ENCODE measurements at regions of chr1 and their contacts with region 1.

Region 1: DNA sequence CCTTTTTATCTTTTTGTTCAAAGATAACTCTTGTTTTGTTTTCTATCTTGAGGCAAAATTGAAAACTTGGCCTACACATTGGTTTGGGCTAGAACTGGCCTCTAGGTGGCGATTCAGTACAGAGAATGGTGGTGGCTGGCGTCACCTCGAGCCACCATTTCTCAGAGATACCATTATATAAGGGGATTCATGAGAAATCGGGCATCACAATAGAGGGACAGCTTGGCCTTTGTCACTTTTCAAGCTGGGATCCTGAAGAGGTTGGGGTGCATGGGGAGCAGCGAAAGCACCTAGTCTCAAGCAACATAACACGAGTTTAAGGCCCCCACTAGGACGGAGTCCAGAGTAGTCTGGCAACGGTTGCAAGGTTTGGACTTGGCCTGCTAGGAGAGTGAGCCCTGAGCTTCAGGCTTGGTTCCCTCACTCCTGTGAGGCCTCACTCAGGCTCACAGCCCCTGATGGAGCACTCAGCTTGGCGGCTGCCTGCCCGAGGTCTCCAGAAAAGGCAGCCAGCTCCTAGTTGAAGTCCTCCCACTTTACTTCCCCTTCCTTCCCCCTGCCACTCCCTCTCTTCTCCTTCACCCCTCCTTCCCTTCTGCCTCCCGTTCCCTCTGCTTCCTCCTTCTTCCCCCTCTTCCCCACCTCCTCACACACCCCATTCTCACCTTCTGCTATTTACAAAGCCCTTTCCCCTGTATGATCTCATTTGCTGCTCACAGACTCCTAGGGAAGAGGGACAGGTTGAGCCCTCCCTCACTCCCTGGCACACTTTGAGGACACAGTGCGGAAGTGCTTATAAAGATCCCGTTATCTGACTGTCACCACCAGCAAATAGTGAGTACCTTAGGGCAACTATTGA is 67.8 kb downstream of the LRIG2 start:
- DNase-seq: peak; percentile 43 to 90 (median 70)

Region 2: DNA sequence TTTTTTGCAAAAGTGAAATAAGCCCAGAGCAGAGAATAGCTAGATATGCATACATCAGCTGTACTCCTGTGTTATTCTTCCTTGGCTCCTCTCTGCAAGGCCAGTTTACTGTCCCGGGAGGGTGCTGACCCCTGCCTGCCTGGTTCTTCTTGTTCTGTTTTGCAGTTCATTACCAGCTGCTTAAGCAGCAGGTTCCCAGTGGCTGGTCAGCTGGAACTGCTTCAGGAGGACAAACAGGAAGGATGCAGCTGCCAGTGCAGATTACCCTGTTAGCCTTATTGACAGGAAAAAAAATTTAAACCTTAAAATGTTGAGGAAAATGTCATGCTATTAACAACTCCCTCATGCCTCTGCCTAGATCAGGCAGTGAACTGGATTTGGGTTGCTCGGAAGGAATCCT is 83.8 kb before region 1 on chr1:
- intact Hi-C with region 1: no loop called
- DNase-seq: peak in 1 of 42 donors; percentile 39

Region 3: DNA sequence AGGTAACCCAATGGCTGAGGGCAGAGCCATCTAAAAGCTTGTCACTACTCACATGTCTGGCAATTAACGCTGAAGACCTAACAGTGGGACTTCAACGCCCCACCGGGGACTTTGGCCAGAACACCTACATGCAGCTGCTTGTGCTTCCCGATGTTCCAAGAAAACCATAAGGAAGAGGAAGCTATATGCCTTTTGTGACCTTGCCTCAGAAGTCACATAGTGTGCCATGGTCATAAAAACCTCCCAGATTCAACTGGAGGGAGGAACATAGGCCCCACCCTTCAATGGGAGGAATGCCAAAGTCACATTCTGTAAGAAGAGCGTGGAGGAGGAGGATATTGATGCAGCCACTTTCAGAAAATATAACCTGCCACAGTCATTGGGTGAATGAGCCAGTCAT is 101.7 kb after region 1 on chr1:
- intact Hi-C with region 1: no loop called
- DNase-seq: no peak

Region 4: GRCh38 chr1:113677250-113678158 is 536.7 kb after region 1 on chr1:
- intact Hi-C with region 1: loop called (anchors 5 kb)
- DNase-seq: peak in 2 of 42 donors; percentile 21 to 22

Measured in head of caudate nucleus (tissue), 42 donors.